CD4-positive, alpha-beta T cell (primary cell): ENCODE measurements at regions of chr20 and their contacts with region 1.

Region 1: GRCh38 chr20:50516180-50516934 is 6.2 kb downstream of the PTPN1 start:
- DNase-seq: peak in 1 of 14 experiments; percentile 34
- ATAC-seq: no peak
- H3K4me3 ChIP-seq: peak overlapping the region; percentile 6
- H3K4me3 Mint-ChIP-seq: peak overlapping the region; percentile 66
- H3K27ac ChIP-seq: peak overlapping the region; percentile 24 to 78
- H3K27ac Mint-ChIP-seq: peak overlapping the region; percentile 82
- H3K4me1 ChIP-seq: peaks cover 57% of the 10 kb centered on the region
- H3K4me1 Mint-ChIP-seq: peaks cover 100% of the 10 kb centered on the region
- H3K27me3 ChIP-seq: no peaks in the 10 kb centered on the region
- H3K27me3 Mint-ChIP-seq: no peaks in the 10 kb centered on the region
- CTCF ChIP-seq: no peak

Region 2: GRCh38 chr20:50534567-50535551 is 18.5 kb after region 1 on chr20:
- CTCF ChIA-PET with region 1: interaction called, 3 read pairs
- POLR2A ChIA-PET with region 1: interaction called, 5 read pairs
- intact Hi-C with region 1: loop called in 1 of 2 experiments (anchors 2 kb)
- DNase-seq: no peak
- ATAC-seq: no peak
- H3K4me3 ChIP-seq: no peak overlapping the region
- H3K4me3 Mint-ChIP-seq: no peak overlapping the region
- H3K27ac ChIP-seq: no peak overlapping the region
- H3K27ac Mint-ChIP-seq: no peak overlapping the region
- H3K4me1 ChIP-seq: peaks cover 44% of the 10 kb centered on the region
- H3K4me1 Mint-ChIP-seq: peaks cover 73% of the 10 kb centered on the region
- H3K27me3 ChIP-seq: no peaks in the 10 kb centered on the region
- H3K27me3 Mint-ChIP-seq: no peaks in the 10 kb centered on the region
- CTCF ChIP-seq: no peak